ENCODE measurements at regions of chr11 and their contacts with region 1.

Region 1: GRCh38 chr11:66408488-66409214 is 12.2 kb upstream of the NPAS4 start:
- DNase-seq: peak; percentile 92
- ATAC-seq: peak; percentile 88
- H3K4me3 Mint-ChIP-seq: peak overlapping the region; percentile 63
- H3K27ac Mint-ChIP-seq: peak overlapping the region; percentile 34
- H3K4me1 Mint-ChIP-seq: peaks cover 3% of the 10 kb centered on the region
- H3K27me3 Mint-ChIP-seq: peaks cover 35% of the 10 kb centered on the region

Region 2: GRCh38 chr11:65988791-65989592 is 419.7 kb before region 1 on chr11:
- CTCF ChIA-PET with region 1: no interaction called
- DNase-seq: peak; percentile 96
- ATAC-seq: peak; percentile 100
- H3K4me3 Mint-ChIP-seq: no peak overlapping the region
- H3K27ac Mint-ChIP-seq: peak overlapping the region; percentile 80
- H3K4me1 Mint-ChIP-seq: peaks cover 8% of the 10 kb centered on the region
- H3K27me3 Mint-ChIP-seq: no peaks in the 10 kb centered on the region

Region 3: DNA sequence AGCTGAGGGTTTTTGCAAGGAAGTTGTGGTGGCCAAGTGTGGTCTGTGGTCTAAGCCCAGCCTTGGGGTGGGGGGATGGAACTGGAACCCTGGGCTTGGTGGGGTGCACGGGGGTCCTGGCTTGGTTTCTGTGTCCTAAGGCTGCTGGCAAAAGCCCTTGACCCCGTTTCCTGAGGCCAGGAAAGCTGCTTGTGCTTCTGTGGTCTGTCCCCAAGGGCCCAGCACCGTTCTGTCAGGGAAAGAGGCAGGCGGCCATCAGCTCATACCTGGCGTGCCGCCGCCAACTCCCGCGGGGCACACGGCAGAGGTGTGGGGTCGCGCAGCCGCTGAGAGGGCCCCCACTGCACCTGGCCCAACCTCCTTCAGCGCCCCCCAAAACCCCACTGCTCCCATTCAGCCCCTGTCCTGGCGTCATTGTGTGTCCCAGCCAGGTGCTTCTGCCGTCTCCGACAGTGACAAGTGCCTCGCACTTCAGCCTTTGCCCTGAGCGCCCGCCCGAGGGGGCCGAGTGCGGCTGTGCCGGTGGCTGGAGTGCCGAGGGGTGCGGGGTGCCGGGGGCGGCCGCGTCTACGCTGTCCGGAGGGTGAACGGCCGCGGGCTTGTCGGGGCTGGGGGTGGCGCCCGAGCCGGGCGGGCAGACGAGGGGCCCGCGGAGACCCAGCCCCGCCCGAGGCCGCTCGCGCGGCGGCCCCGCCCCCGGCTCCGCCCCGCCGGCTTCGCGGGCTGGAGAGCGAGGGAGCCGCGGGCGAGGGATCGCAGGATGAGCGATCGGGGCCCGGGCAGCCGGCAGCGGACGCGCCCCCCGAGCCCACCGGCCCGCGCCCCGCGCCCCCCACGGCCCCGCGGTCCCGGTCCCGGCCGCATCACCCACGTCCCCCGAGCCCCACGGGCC is 130.9 kb before region 1 on chr11 and contains the start of gene CNIH2:
- CTCF ChIA-PET with region 1: no interaction called
- DNase-seq: no peak
- ATAC-seq: peak; percentile 56
- H3K4me3 Mint-ChIP-seq: no peak within 1 kb of the TSS
- H3K27ac Mint-ChIP-seq: no peak within 1 kb of the TSS
- H3K4me1 Mint-ChIP-seq: peaks cover 28% of the 10 kb centered on the region
- H3K27me3 Mint-ChIP-seq: peaks cover 3% of the 10 kb centered on the region
- total RNA-seq, gene CNIH2: 1.1 to 1.2 TPM

Region 4: DNA sequence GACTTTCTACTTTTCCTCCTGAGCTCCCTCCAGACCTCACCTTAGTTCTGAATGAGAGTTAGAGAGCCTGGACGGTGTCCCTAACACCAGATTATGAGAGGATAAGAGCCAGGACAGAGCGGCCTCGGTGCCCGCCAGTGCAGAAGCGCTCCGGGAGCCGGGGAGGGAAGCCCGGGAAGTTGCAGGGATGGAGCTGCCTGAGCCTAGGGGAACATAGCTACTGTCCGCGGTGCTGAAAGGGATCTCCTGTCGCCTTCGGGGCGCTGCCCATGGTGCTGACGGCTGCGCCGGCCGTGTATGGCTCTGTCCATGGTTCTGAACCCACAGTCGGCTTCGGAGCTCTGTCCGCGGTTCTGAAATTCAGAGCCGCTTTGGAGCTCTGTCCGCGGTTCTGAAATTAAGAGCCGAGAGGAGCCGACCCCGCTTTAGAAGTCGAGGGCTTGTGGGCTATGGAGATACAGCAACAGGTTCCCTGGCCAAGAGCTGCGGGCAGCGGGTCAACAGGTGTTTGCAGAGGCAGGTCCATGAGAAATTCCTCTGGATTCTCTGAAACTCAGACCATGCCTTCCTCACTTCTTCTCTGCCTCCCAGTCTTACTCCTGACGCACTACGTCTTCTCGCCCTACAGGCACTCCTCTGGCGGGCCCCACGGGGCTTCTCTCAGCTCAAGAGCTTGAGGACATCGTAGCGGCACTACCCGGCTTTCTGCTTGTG is 13.0 kb after region 1 on chr11:
- CTCF ChIA-PET with region 1: interaction called, 37 read pairs
- DNase-seq: peak; percentile 91
- ATAC-seq: peak; percentile 79
- H3K4me3 Mint-ChIP-seq: no peak overlapping the region
- H3K27ac Mint-ChIP-seq: no peak overlapping the region
- H3K4me1 Mint-ChIP-seq: peaks cover 14% of the 10 kb centered on the region
- H3K27me3 Mint-ChIP-seq: peaks cover 35% of the 10 kb centered on the region

Region 5: GRCh38 chr11:66429983-66430602 is 21.4 kb after region 1 on chr11:
- CTCF ChIA-PET with region 1: interaction called, 37 read pairs
- DNase-seq: peak; percentile 82
- ATAC-seq: peak; percentile 95
- H3K4me3 Mint-ChIP-seq: no peak overlapping the region
- H3K27ac Mint-ChIP-seq: no peak overlapping the region
- H3K4me1 Mint-ChIP-seq: no peaks in the 10 kb centered on the region
- H3K27me3 Mint-ChIP-seq: no peaks in the 10 kb centered on the region

Region 6: DNA sequence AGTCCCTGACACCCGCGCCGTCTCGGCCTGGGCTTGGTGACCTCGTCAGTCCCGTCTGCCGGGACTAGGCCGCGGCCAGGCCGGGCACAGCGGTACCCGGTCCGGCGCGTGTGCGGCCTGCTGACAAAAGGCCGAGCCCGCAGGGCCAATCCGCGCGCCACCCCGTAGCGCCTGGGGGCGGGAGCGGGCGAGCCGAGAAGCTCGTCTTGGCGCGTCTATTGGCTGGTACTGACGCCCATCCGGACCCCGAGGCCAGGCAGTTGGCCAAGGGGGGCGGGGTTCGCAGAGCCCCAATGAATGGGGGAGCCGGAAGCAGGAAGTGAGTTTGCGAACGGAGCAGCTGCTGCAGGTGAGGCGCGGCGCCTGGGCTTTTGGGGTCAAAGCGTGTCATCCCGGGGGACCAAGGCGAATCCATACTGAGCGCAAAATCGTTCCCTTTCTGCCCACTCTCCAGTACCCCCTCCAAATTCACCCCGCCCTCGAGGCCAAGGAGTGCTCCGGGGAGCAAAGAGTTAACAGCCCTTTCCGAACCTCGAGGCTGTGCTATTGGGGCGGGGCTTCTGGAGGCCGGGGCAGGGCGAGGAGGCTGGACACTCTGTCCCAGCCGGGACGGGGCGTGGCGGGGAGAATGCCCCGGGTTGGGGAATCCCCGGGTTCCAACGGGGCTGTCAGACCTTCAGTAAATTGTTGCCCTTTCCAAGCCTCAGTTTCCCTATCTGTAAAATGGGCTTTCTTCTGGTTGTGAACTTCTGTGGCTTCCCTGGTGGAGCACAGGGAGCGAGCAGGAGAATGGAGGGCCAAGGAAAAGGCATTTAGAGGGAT is 71.7 kb after region 1 on chr11 and contains the start of gene DPP3:
- CTCF ChIA-PET with region 1: interaction called, 24 read pairs
- DNase-seq: peak; percentile 98
- ATAC-seq: peak; percentile 98
- H3K4me3 Mint-ChIP-seq: peak within 1 kb of the TSS; percentile 91
- H3K27ac Mint-ChIP-seq: peak within 1 kb of the TSS; percentile 93
- H3K4me1 Mint-ChIP-seq: peaks cover 33% of the 10 kb centered on the region
- H3K27me3 Mint-ChIP-seq: no peaks in the 10 kb centered on the region
- total RNA-seq, gene DPP3: 54.2 to 79.6 TPM

Measured in activated CD8-positive, alpha-beta memory T cell treated with anti-CD3 and anti-CD28 coated beads, Interleukin-2, amount 10 ng/mL, durations not matched to agents 7 days and 5 days (primary cell).